ENCODE measurements at regions of chr3 and their contacts with region 1.

Region 1: DNA sequence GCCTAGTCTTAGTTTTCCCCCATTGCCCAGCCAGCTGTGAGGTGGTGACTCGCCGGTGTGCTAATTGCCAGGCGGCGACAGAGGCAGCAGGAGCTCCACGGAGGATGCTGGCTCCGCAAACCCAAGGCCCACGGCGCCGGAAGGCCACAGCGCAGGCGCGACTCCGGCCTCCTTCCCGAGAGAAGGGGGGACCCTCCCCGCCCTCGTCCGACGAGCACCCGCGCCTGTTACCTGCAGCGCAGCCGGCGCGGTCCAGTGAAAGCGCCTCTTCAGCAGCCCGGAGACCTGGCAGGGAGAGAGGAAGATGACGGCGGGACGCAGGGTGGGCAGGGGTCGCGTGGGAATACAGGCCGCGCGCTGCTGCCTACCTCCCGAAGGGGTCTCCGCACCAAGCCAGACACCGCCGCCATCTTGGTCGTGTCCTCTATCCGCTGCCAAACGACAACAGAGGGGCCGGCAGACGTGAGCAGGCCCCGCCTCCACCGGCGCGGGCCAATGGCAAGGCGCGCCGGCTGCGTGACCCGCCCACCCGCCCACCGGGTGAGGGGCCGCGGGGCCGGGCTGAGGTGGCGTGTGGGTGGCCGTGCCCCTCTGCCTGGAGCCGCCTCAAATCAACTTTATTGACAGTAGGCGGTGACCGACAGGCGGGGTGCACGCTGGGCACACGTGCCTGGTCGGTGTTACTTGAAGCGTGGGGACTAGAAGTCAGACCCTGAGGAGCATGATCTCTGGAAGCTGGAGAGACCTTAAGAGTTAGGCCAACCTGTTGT is at the start of gene PDHB:
- DNase-seq: peak; percentile 85 to 89
- ATAC-seq: peak; percentile 98
- H3K4me3 ChIP-seq: peak within 1 kb of the TSS; percentile 64 to 83 (median 76)
- H3K27ac ChIP-seq: peak within 1 kb of the TSS; percentile 87 to 95 (median 90)
- H3K4me1 ChIP-seq: peaks cover 20 to 23% of the 10 kb centered on the region in 2 donors
- H3K27me3 ChIP-seq: no peaks in the 10 kb centered on the region
- CTCF ChIP-seq: peak in 1 of 5 experiments; percentile 12
- POLR2A ChIP-seq: peak; percentile 73 to 79
- total RNA-seq, gene PDHB: 131 to 195 (median 169) TPM

Region 2: DNA sequence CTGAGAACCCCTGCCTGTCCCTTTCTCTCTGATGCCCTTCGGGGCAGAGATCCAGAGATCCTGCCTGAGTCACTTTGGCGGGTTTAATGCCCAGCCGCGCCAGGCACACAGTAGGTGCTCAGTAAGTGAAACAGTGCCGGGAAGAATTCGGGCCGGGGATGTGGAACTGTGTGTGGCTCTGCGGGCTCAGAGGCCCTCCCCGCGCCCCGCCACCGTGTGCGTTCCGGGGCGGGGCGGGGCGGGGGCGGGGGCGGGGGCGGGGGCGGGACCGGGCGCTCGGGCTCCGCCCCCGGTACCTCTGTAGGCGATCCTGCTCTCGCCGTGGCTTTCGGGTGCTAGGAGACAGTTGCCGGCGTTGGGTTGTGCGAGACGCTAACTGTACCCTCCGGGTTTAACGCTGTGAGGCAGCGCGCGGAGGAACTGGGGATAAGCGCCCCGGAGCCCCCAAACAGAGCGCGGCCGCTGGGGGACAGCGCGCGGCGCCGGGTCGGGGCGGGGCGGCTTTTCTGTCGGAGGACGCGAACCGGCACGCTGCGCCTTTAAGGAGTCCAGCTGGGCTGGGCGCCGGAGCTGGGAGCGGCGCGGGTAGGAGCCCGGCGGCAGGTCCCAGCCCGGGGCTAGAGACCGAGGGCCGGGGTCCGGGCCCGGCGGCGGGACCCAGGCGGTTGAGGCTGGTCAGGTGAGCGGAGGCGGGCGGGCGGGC is 196.2 kb before region 1 on chr3 and contains the start of gene ABHD6:
- in situ Hi-C with region 1: no loop called
- intact Hi-C with region 1: loop called (anchors 5 kb)
- DNase-seq: peak; percentile 49 to 51
- ATAC-seq: peak; percentile 91 to 94
- H3K4me3 ChIP-seq: peak within 1 kb of the TSS; percentile 68 to 96 (median 76)
- H3K27ac ChIP-seq: peak within 1 kb of the TSS; percentile 76 to 87 (median 86)
- H3K4me1 ChIP-seq: peaks cover 9 to 14% of the 10 kb centered on the region in 2 donors
- H3K27me3 ChIP-seq: no peaks in the 10 kb centered on the region
- CTCF ChIP-seq: peak in 4 of 5 experiments; percentile 18 to 47 (median 40)
- POLR2A ChIP-seq: peak; percentile 31 to 37
- total RNA-seq, gene ABHD6: 5.8 to 14.0 (median 9.6) TPM

Region 3: DNA sequence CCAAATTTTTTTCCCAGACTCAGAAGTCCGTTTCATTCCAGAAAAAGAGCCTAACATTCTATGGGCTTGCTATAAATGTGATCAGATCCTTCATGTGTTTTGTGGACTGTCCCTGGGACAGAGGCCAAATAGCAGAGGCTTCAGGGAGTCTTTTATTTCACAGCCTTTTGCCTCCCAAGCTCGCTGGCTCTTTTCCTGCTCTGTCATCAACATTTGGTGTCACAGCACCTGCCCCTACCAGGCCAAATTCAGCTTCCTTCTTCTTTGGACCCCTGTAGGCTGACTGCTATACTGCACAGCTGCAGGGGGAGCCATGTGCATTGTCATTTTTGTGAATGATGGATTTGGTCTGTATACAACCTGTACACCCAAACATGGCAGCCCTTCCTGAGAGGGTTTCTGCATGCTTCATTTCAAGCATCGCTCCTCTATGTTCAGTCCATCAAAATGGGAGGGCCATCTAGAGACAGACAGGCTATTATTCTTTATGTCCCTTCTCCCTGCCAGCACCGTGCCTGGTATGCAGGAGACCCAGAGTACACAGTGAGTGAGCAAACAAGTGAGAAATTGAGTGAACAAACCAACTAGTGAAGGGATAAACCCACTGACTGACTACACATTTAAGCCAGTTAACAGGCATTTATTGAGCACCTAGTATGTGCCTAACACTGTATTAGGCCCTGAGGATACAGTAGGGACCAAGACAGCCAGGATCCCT is 145.4 kb before region 1 on chr3:
- in situ Hi-C with region 1: no loop called
- intact Hi-C with region 1: no loop called
- DNase-seq: peak; percentile 24 to 36
- ATAC-seq: peak; percentile 65 to 82
- H3K4me3 ChIP-seq: no peak overlapping the region
- H3K27ac ChIP-seq: peak overlapping the region in 2 of 4 donors; percentile 22 to 50
- H3K4me1 ChIP-seq: peaks cover 0 to 9% of the 10 kb centered on the region in 2 donors
- H3K27me3 ChIP-seq: no peaks in the 10 kb centered on the region
- CTCF ChIP-seq: no peak
- POLR2A ChIP-seq: no peak

Region 4: DNA sequence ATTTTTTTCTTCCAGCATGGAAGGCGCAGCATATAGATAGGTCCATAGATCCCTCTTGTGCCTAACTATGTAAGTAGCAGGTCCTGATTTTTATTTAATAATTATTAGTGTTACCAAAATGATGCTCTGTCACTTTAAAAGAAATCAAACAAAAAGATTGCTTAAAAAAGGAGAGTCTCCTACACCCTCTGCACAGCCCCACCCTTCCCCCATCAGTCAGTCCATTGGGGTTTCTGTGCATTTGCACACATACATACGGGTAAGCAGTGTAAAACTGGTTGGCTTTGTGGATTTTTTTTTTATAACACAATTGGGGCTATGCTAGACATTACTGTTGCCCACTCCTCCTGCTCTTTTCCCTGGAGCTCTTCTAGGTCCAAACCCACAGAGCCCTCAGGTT is 134.5 kb before region 1 on chr3:
- in situ Hi-C with region 1: no loop called
- intact Hi-C with region 1: no loop called
- DNase-seq: no peak
- ATAC-seq: no peak
- H3K4me3 ChIP-seq: no peak overlapping the region
- H3K27ac ChIP-seq: no peak overlapping the region
- H3K4me1 ChIP-seq: peaks cover 0 to 14% of the 10 kb centered on the region in 2 donors
- H3K27me3 ChIP-seq: peaks cover 0 to 4% (median 0%) of the 10 kb centered on the region in 3 donors
- CTCF ChIP-seq: no peak
- POLR2A ChIP-seq: no peak

Region 5: DNA sequence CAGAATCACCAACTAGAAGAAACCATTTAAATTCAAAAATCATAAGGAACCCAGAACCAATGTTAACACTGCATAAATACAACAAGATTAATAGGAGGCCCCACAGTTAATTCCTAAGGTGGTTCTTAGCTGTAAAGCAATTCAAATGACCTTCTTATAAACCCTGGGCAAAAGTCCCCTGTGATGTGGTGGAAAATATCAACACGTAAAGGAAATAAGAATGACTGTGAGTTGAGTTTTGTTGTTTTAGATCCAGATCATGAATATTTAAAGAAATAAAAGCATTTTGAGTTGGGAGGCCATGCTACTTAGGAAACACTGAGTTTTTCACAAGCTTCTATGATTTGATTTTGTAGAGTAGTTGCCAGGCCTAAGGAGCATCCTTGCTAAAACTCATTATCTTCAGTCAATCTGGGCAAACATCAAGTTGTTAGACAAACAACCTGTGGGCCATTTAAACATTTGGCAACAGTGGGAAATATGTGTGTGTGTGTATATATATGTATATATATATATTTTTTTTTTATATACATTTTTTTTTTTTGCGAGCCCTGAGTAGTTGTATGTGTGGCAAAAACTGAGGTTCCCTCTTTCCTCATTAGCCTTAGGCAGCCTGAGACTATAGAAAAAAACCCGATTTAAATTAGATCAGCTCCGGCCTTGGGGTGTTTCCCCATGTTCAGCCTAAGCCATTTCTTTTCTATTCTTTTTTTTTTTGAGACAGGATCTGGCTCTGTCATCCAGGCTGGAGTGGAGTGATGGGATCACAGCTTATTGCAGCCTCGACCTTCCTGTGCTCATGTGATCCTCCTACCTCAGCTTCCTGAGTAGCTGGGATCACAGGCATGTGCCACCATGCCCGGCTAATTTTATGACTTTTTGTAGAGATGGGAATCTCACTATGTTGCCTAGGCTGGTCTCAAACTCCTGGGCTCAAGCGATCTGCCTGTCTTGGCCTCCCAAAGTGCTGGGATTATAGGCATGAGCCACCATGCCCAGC is 108.9 kb before region 1 on chr3:
- in situ Hi-C with region 1: no loop called
- intact Hi-C with region 1: no loop called
- DNase-seq: no peak
- ATAC-seq: no peak
- H3K4me3 ChIP-seq: no peak overlapping the region
- H3K27ac ChIP-seq: peak overlapping the region in 2 of 4 donors; percentile 19 to 35
- H3K4me1 ChIP-seq: peaks cover 0 to 2% of the 10 kb centered on the region in 2 donors
- H3K27me3 ChIP-seq: no peaks in the 10 kb centered on the region
- CTCF ChIP-seq: no peak
- POLR2A ChIP-seq: no peak

Region 6: GRCh38 chr3:58463181-58463941 is 29.8 kb after region 1 on chr3:
- in situ Hi-C with region 1: no loop called
- intact Hi-C with region 1: loop called (anchors 1 kb)
- DNase-seq: peak; percentile 54 to 71
- ATAC-seq: peak; percentile 88 to 93
- H3K4me3 ChIP-seq: peak overlapping the region; percentile 12 to 50 (median 42)
- H3K27ac ChIP-seq: peak overlapping the region; percentile 22 to 61 (median 52)
- H3K4me1 ChIP-seq: peaks cover 17 to 18% of the 10 kb centered on the region in 2 donors
- H3K27me3 ChIP-seq: no peaks in the 10 kb centered on the region
- CTCF ChIP-seq: peak; percentile 65 to 83 (median 74)
- POLR2A ChIP-seq: no peak

Region 7: DNA sequence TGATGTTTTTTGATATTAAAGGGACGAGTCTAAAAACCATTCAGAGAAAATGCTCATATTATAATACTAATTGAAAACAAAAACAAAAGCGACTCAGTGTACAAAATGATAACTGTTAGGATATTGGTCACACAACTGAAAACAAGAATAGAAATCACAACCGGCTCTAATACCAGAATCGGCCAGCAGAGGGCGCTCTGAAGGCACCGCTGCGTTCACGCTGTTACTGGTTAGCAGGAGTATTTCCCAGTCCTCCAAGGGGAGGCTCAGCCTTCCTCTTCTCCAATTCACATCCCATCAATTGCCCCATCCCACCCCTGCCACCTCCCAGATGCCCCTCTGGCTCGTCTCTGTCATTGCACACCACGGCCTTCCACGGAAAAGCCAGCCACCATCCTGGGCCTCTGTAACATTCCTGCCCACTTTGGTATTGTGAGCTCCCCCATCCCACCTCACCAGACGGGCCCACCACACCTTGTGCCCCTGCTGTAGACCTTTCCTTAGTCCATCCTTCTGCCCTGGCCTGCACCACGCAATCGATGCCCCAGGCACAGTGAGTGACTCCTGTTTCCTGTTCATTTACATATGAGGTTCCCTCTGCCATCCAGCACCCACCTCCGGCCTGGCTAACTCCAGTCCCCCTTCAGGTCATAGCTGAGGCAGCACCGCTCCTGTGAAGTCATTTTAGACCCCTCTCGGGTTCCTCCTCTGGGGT is 135.1 kb after region 1 on chr3:
- in situ Hi-C with region 1: no loop called
- intact Hi-C with region 1: no loop called
- DNase-seq: peak; percentile 35 to 62
- ATAC-seq: peak; percentile 61 to 82
- H3K4me3 ChIP-seq: no peak overlapping the region
- H3K27ac ChIP-seq: no peak overlapping the region
- H3K4me1 ChIP-seq: no peaks in the 10 kb centered on the region
- H3K27me3 ChIP-seq: no peaks in the 10 kb centered on the region
- CTCF ChIP-seq: peak; percentile 81 to 95 (median 89)
- POLR2A ChIP-seq: no peak

Measured in gastrocnemius medialis (tissue), 4 donors.